ENCODE measurements at regions of chr7 and their contacts with region 1.

Region 1: DNA sequence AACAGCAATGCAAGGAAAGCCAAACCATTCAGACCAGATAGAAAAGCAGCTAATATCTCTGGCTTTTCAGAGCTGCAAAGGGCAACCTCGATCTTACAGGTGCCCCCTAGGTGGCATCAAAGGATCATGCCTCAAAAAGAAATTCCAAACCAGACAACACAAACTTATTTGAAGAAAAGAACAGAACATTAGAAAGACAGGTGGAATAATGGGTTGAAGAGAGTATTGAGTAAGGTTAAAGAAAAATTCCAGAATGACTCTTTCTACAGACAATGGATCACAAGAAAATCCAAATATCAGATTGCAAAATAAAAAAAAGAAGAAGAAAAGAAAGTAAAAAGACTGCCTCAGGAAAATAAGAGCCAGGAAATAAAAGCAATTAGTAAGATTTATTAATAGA is 213.7 kb downstream of the ELMO1 start:
- DNase-seq: peak; percentile 56
- H3K4me3 ChIP-seq: no peak overlapping the region
- H3K27ac ChIP-seq: no peak overlapping the region
- H3K4me1 ChIP-seq: no peaks in the 10 kb centered on the region
- H3K27me3 ChIP-seq: no peaks in the 10 kb centered on the region
- CTCF ChIP-seq: peak; percentile 40 to 53
- POLR2A ChIP-seq: no peak

Region 2: DNA sequence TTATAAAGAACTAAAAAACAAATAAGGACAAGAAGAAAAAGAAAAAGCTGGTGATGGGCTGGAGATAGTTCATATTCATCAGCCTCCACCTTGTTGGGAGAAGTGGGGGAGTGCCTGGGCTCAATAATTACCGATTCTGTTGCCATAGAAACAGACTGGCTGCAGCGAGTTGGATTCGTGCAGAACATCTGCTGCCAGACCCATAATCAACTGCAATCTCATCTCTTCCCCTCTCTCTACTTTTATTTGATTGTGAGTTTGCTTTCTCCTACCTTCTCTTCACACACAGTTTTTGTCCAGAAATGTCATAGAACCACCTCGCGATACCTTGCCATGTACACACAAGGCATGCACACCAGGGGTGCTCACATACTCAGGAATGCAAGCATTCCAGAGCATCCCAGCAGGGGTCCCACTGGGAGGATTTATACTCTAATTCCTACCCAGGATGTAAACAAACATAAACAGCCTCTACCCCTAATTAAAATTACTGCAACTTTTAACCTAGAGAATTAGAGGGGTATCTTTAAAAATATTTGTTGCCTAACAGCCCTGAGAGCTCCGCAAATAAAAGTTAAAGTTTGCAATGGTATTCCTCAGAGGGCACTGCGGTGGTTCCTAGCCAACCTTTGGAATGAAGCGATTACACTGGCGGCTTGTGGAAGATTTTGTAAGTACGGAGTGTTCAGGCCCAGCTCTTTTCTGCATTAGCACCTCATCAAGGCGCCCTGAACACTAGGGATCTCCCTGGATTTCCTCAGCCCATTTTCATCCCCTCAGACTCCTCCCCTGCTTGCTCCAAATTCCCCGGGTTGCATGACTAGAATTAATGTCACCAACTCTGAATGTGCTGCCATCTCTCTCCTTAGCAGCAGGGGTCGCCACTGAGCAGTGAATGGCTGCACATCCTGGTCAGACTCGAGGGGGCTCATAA is 248.2 kb before region 1 on chr7:
- CTCF ChIA-PET with region 1: no interaction called
- POLR2A ChIA-PET with region 1: no interaction called
- dilution Hi-C with region 1: no loop called
- intact Hi-C with region 1: no loop called
- DNase-seq: peak; percentile 54
- H3K4me3 ChIP-seq: no peak overlapping the region
- H3K27ac ChIP-seq: no peak overlapping the region
- H3K4me1 ChIP-seq: no peaks in the 10 kb centered on the region
- H3K27me3 ChIP-seq: no peaks in the 10 kb centered on the region
- CTCF ChIP-seq: peak; percentile 86 to 92
- POLR2A ChIP-seq: no peak

Region 3: DNA sequence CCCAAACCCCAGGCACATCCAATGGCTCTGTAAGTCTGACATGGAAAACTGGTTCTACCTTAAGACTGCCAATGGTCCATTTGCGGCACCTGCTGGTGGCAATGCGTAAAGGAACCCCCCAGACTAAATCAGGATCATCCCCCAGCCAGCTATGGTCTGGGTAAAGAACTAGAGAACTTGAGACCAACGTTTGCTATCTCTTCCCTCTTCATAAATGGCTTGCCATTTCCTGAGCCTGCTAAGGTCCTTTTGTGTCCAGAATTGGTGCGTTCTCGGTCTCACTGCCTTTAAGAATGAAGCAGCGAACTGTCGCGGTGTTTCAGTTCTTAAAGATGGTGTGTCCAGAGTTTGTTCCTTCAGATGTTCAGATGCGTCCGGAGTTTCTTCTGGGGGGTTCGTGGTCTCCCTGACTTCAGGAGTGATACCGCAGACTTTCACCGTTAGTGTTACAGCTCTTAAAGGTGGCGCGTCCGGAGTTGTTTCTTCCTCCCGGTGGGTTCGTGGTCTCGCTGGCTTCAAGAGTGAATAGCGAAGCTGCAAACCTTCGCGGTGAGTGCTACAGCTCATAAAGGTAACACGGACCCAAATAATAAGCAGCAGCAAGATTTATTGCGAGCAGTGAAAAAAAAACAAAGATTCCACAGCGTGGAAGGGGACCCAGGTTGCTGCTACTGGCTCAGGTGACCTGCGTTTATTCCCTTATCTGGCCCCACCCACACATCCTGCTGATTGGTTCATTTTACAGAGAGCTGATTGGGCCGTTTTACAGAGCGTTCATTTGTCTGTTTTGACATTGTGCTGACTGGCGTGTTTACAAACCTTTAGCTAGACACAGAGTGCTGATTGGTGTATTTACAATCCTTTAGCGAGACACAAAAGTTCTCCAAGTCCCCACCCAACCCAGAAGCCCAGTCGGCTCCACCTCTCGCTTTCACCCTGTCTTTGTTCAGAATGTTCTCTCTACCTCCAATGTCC is 118.3 kb after region 1 on chr7:
- CTCF ChIA-PET with region 1: no interaction called
- POLR2A ChIA-PET with region 1: no interaction called
- dilution Hi-C with region 1: no loop called
- intact Hi-C with region 1: loop called (anchors 5 kb)
- DNase-seq: no peak
- H3K4me3 ChIP-seq: no peak overlapping the region
- H3K27ac ChIP-seq: peak overlapping the region; percentile 66
- H3K4me1 ChIP-seq: peaks cover 21% of the 10 kb centered on the region
- H3K27me3 ChIP-seq: no peaks in the 10 kb centered on the region
- CTCF ChIP-seq: peak; percentile 6 to 11
- POLR2A ChIP-seq: no peak

Region 4: GRCh38 chr7:37495574-37496184 is 260.8 kb after region 1 on chr7:
- CTCF ChIA-PET with region 1: interaction called, 44 read pairs
- POLR2A ChIA-PET with region 1: no interaction called
- dilution Hi-C with region 1: no loop called
- intact Hi-C with region 1: loop called (anchors 1 kb)
- DNase-seq: peak; percentile 52
- H3K4me3 ChIP-seq: no peak overlapping the region
- H3K27ac ChIP-seq: no peak overlapping the region
- H3K4me1 ChIP-seq: no peaks in the 10 kb centered on the region
- H3K27me3 ChIP-seq: no peaks in the 10 kb centered on the region
- CTCF ChIP-seq: peak; percentile 42 to 57
- POLR2A ChIP-seq: no peak

Region 5: DNA sequence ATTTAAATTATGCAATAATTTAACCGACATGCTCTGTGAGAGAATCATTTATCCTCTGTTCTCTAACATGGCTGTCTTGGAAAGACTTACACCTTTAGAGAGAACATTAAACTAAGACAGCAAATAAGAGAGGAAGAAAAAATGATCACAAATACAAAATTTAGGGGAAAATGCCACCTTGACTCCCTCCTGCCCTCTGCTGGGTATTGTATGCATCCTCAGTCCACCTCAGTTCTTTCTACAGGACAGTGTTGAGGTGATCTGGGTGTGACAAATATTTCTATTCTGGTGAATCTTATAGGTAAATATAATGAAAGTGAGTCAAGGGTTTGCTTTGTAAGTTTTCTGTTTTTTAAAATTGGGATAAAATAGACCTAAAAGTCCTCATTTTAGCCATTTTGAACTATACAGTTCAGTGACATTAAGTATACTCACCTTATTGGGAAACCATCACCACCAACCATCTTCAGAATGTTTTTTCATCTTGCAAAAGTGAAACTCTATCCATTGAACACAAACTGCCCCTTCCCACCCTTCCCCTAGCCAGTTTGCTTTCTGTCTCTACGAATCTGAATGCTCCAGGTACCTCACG is 275.2 kb after region 1 on chr7:
- CTCF ChIA-PET with region 1: interaction called, 72 read pairs
- POLR2A ChIA-PET with region 1: no interaction called
- dilution Hi-C with region 1: no loop called
- intact Hi-C with region 1: loop called (anchors 1 kb)
- DNase-seq: peak; percentile 46
- H3K4me3 ChIP-seq: no peak overlapping the region
- H3K27ac ChIP-seq: no peak overlapping the region
- H3K4me1 ChIP-seq: peaks cover 3% of the 10 kb centered on the region
- H3K27me3 ChIP-seq: peaks cover 11 to 14% of the 10 kb centered on the region in 2 experiments
- CTCF ChIP-seq: peak; percentile 72 to 76
- POLR2A ChIP-seq: no peak

Region 6: DNA sequence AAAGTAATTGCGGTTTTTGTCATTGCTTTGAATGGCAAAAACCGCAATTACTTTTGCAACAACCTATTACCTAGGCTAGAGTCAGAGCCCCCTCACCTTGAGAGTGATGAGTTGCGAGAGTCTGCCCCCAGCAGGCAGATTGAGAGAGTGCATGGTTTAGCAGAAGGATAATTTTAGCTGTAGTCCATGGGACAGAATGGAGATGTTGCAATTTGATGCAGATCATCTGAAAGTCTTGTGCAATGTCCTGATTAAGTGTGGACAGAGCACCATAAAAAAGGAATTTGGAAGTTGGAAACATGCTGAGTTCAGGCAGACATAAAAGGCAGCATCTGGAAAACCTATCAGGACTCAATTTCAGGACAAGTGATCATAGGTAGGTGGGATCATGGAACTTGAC is 497.3 kb after region 1 on chr7:
- CTCF ChIA-PET with region 1: interaction called, 3 read pairs
- POLR2A ChIA-PET with region 1: no interaction called
- dilution Hi-C with region 1: no loop called
- intact Hi-C with region 1: loop called (anchors 10 kb)
- DNase-seq: peak; percentile 25
- H3K4me3 ChIP-seq: no peak overlapping the region
- H3K27ac ChIP-seq: no peak overlapping the region
- H3K4me1 ChIP-seq: no peaks in the 10 kb centered on the region
- H3K27me3 ChIP-seq: peaks cover 2 to 3% of the 10 kb centered on the region in 2 experiments
- CTCF ChIP-seq: peak; percentile 28 to 58
- POLR2A ChIP-seq: no peak

Region 7: GRCh38 chr7:37833107-37833817 is 598.3 kb after region 1 on chr7:
- CTCF ChIA-PET with region 1: interaction called, 19 read pairs
- POLR2A ChIA-PET with region 1: no interaction called
- dilution Hi-C with region 1: no loop called
- intact Hi-C with region 1: loop called (anchors 1 kb)
- DNase-seq: peak; percentile 40
- H3K4me3 ChIP-seq: peak overlapping the region in 1 of 3 experiments; percentile 8
- H3K27ac ChIP-seq: no peak overlapping the region
- H3K4me1 ChIP-seq: no peaks in the 10 kb centered on the region
- H3K27me3 ChIP-seq: peaks cover 0 to 2% of the 10 kb centered on the region in 2 experiments
- CTCF ChIP-seq: peak; percentile 48 to 52
- POLR2A ChIP-seq: no peak

Region 8: GRCh38 chr7:37853474-37853873 is 618.5 kb after region 1 on chr7:
- CTCF ChIA-PET with region 1: no interaction called
- POLR2A ChIA-PET with region 1: no interaction called
- dilution Hi-C with region 1: no loop called
- intact Hi-C with region 1: loop called (anchors 5 kb)
- DNase-seq: peak; percentile 6
- H3K4me3 ChIP-seq: no peak overlapping the region
- H3K27ac ChIP-seq: no peak overlapping the region
- H3K4me1 ChIP-seq: no peaks in the 10 kb centered on the region
- H3K27me3 ChIP-seq: no peaks in the 10 kb centered on the region
- CTCF ChIP-seq: peak; percentile 12 to 13
- POLR2A ChIP-seq: no peak